Activated CD8-positive, alpha-beta T cell treated with anti-CD3 and anti-CD28 coated beads for 36 hours (primary cell): ENCODE measurements at regions of chr2 and their contacts with region 1.

Region 1: GRCh38 chr2:44479122-44479887 is 117.6 kb downstream of the CAMKMT start:
- DNase-seq: peak; percentile 46
- ATAC-seq: peak; percentile 100
- H3K4me3 Mint-ChIP-seq: no peak overlapping the region
- H3K27ac Mint-ChIP-seq: no peak overlapping the region
- H3K4me1 Mint-ChIP-seq: peaks cover 8% of the 10 kb centered on the region
- H3K27me3 Mint-ChIP-seq: no peaks in the 10 kb centered on the region
- CTCF ChIP-seq: peak; percentile 100

Region 2: DNA sequence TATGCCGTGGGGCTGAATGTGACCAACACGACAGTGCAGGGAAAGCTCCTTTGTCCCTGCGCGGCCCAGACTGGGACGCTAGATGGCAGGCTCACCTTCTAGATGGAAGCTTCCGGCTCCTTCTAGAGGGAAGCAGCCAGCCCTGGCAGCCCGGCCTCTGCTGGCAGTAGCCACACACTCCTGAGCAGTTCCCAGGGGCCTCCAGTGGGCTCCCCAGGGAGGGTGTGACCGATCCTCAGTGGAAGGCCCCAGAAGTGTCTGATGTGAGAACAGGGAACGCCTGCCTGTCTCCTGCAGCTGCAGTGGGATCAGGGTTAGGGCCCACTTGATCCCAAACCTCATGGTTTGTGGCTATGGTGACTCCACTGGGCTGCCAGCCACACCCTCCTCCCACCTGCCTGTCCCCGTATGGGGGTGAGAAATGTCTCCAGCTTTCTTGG is 435.0 kb before region 1 on chr2:
- CTCF ChIA-PET with region 1: interaction called, 16 read pairs
- POLR2A ChIA-PET with region 1: no interaction called
- intact Hi-C with region 1: no loop called
- DNase-seq: peak; percentile 91
- ATAC-seq: peak; percentile 100
- H3K4me3 Mint-ChIP-seq: no peak overlapping the region
- H3K27ac Mint-ChIP-seq: no peak overlapping the region
- H3K4me1 Mint-ChIP-seq: no peaks in the 10 kb centered on the region
- H3K27me3 Mint-ChIP-seq: peaks cover 2% of the 10 kb centered on the region
- CTCF ChIP-seq: peak; percentile 84

Region 3: GRCh38 chr2:44442019-44442418 is 37.3 kb before region 1 on chr2:
- CTCF ChIA-PET with region 1: interaction called, 11 read pairs
- POLR2A ChIA-PET with region 1: no interaction called
- intact Hi-C with region 1: no loop called
- DNase-seq: no peak
- ATAC-seq: no peak
- H3K4me3 Mint-ChIP-seq: no peak overlapping the region
- H3K27ac Mint-ChIP-seq: no peak overlapping the region
- H3K4me1 Mint-ChIP-seq: no peaks in the 10 kb centered on the region
- H3K27me3 Mint-ChIP-seq: no peaks in the 10 kb centered on the region
- CTCF ChIP-seq: no peak

Region 4: DNA sequence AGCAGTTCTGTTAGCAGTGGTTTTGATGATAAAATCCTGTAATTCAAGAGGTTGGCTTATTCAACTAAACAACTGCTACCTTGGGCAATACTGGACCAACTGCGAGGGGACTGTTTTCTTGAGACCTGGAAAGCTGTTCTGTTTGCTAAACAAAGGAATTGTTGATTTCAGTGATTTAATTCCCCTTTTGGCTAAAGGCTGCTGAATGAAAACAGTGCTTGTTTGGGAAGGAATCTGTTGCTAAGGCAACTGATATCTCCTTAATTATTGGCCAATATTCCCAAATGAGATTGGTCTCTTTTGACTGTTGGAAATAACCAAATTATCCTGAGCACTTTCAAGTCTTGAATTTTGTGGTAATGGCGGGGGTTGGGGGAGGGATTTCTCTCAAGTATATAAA is 19.2 kb after region 1 on chr2:
- CTCF ChIA-PET with region 1: interaction called, 48 read pairs
- POLR2A ChIA-PET with region 1: no interaction called
- intact Hi-C with region 1: no loop called
- DNase-seq: no peak
- ATAC-seq: no peak
- H3K4me3 Mint-ChIP-seq: no peak overlapping the region
- H3K27ac Mint-ChIP-seq: no peak overlapping the region
- H3K4me1 Mint-ChIP-seq: no peaks in the 10 kb centered on the region
- H3K27me3 Mint-ChIP-seq: no peaks in the 10 kb centered on the region
- CTCF ChIP-seq: no peak

Region 5: DNA sequence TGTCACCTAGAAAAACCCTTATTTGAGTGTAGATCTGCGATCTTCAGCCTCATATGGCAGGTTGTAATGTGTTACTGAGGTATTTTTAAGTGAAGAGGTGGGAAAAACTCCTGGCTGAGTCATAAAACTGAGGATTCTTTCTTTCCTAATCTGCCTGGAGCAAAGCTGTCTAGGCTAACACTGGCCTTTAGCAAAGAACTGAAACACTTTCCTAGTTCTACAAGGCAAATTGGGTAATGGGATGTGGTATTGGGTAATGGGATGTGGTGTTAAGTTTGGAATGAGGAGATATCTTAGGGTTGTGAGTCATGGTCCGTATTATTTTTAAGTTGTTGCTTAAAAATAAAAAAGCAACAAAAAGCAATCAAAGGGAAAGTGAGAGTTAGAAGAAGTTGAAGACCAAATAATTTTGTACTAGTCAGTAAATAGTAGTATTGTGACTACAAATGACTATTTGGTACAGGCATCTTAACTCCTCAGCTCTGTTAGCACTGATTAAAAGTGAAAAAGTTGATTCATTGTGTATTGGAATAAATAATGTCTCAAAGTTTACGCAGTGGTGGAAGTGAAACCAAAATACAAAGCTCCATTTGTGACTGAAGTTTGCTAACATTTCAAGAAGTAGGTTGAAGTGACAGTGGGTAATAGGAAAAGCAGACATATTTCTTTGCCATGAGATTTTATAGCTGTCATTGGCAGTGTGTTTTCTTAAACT is 99.3 kb after region 1 on chr2:
- CTCF ChIA-PET with region 1: interaction called, 21 read pairs
- POLR2A ChIA-PET with region 1: no interaction called
- intact Hi-C with region 1: no loop called
- DNase-seq: no peak
- ATAC-seq: peak; percentile 85
- H3K4me3 Mint-ChIP-seq: peak overlapping the region; percentile 42
- H3K27ac Mint-ChIP-seq: peak overlapping the region; percentile 83
- H3K4me1 Mint-ChIP-seq: peaks cover 49% of the 10 kb centered on the region
- H3K27me3 Mint-ChIP-seq: no peaks in the 10 kb centered on the region
- CTCF ChIP-seq: no peak

Region 6: DNA sequence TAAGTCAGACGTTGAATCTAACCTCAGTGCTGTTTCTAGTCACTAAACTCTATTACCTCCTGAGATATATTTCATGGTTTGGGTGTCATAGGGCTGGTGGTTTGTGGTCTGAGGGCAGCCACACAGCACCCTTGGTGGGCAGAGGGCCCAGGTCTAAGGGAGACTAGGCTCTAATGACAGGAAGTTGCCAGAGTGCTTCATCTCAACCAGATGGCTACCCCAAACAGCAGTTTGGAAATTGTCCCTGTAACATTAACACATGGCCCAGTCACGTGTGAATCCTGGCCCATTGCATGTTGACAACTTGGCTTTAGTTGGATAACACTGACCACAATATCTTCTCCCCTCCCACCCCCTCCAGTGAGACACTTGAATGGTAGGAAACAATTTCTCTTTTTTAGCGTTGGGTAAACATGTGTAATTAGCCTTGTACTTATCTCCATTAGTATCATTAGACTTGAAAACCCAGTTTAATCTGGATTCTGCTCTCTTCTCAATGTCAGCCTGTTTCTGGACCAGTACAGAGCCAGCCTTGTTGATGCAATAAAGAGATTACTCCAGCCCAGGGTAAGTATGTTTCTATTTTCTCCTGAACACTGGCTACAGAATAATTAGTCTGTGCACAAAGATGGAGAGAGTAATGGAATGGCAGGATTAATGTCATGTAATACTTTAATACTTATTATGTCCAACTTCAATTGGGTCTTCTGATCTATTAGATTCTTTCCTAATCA is 274.4 kb after region 1 on chr2:
- CTCF ChIA-PET with region 1: interaction called, 11 read pairs
- POLR2A ChIA-PET with region 1: interaction called, 3 read pairs
- intact Hi-C with region 1: no loop called
- DNase-seq: peak; percentile 61
- ATAC-seq: peak; percentile 87
- H3K4me3 Mint-ChIP-seq: no peak overlapping the region
- H3K27ac Mint-ChIP-seq: no peak overlapping the region
- H3K4me1 Mint-ChIP-seq: peaks cover 10% of the 10 kb centered on the region
- H3K27me3 Mint-ChIP-seq: no peaks in the 10 kb centered on the region
- CTCF ChIP-seq: no peak

Region 7: GRCh38 chr2:44955593-44956392 is 476.5 kb after region 1 on chr2:
- CTCF ChIA-PET with region 1: interaction called, 100 read pairs
- POLR2A ChIA-PET with region 1: no interaction called
- intact Hi-C with region 1: loop called (anchors 5 kb)
- DNase-seq: peak; percentile 81
- ATAC-seq: peak; percentile 84
- H3K4me3 Mint-ChIP-seq: peak overlapping the region; percentile 39
- H3K27ac Mint-ChIP-seq: no peak overlapping the region
- H3K4me1 Mint-ChIP-seq: peaks cover 14% of the 10 kb centered on the region
- H3K27me3 Mint-ChIP-seq: peaks cover 48% of the 10 kb centered on the region
- CTCF ChIP-seq: peak; percentile 83